Astrocyte of the cerebellum (primary cell): ENCODE measurements at regions of chr6 and their contacts with region 1.

Region 1: DNA sequence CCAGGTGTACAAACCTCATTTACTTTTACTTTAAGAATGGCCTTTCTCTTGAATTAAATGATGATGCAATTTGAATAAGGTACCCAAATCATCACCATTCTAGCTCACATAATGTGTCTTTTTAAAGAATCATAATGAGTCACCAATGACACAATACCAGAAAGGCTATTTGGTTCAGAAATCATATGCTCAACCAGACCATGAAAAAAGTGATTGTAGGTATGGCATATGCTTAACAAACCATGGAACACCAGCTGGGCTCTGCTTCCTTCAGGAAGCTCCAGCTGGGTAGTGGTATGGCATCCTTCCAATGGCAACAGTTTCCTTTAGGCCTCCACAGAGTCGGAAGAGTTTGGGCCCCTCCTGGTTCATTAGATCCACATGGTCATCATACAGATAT is 128.2 kb downstream of the FRK start:
- DNase-seq: peak; percentile 100
- H3K4me3 ChIP-seq: no peak overlapping the region
- CTCF ChIP-seq: no peak

Region 2: DNA sequence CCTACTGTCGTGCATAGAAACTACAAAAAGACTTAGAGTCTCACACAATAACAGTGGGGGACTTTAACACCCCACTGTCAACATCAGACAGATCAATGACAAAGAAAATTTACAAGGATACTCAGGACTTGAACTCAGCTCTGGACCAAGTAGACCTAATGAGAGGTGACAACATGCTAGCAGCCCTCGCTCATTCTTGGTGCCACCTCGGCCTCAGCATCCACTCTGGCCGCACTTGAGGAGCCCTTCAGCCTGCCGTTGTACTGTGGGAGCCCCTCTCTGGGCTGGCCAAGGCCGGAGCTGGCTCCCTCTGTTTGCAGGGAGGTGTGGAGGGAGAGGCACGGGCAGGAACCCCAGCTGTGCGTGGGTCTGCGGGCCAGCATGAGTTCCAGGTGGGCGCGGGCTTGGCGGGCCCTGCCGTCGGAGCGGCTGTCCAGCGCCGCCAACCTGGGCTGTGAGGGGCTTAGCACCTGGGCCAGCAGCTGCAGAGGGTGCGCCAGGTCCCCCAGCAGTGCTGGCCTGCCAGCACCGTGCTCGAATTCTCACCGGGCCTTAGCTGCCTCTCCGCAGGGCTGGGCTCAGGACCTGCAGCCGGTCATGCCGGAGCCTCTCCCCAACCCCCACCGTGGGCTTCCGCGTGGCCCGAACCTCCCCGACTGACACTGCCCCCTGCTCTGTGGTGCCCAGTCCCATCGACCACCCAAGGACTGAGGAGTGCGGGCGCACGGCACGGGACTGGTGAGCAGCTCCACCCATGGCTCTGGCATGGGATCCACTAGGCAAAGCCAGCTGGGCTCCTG is 77.4 kb before region 1 on chr6:
- in situ Hi-C with region 1: no loop called
- DNase-seq: no peak
- H3K4me3 ChIP-seq: no peak overlapping the region
- CTCF ChIP-seq: no peak

Region 3: GRCh38 chr6:116027801-116028200 is 95.3 kb after region 1 on chr6:
- in situ Hi-C with region 1: loop called (anchors 5 kb)
- DNase-seq: no peak
- H3K4me3 ChIP-seq: no peak overlapping the region
- CTCF ChIP-seq: no peak